PC-3 (cell line): ENCODE measurements at regions of chr5 and their contacts with region 1.

Region 1: GRCh38 chr5:14035859-14036440 is 91.5 kb upstream of the DNAH5 start:
- DNase-seq: peak; percentile 100
- ATAC-seq: peak; percentile 68
- H3K4me3 ChIP-seq: peak overlapping the region; percentile 53
- H3K27ac ChIP-seq: peak overlapping the region; percentile 97
- H3K4me1 ChIP-seq: peaks cover 80% of the 10 kb centered on the region
- H3K27me3 ChIP-seq: no peaks in the 10 kb centered on the region
- CTCF ChIP-seq: no peak

Region 2: DNA sequence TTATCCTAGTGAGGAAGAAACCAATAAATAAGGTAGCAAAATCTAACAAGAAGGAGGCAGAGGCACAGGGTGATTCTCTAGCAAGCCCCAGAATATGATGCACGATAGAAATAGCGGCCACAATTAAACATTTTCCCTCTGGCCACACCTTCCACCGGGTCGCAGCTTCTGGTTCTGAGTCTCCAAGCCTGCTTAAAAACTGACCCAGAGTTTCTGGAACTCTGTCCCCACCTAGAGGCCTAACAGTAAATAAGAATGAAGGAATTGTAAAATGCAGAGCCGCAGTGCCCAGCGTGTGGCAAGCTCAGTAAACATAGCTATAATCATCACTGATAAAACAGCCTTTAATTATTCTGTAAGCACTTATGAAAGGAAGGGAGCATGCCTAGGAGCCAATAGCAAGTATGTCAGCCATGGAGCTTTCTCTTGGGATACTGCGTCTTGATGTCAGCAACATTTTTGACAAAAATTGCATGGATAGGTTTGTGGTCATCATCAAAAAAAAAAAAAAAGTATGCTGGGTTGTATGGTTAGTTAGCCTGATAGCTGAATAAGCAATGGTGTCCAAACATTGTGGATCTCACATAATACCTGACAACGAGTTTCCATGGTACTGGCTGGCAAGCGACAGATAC is 557.0 kb before region 1 on chr5:
- CTCF ChIA-PET with region 1: no interaction called
- POLR2A ChIA-PET with region 1: no interaction called
- intact Hi-C with region 1: no loop called
- DNase-seq: peak; percentile 83
- ATAC-seq: peak; percentile 57
- H3K4me3 ChIP-seq: no peak overlapping the region; the same call in 1 of the 2 replicates
- H3K27ac ChIP-seq: no peak overlapping the region
- H3K4me1 ChIP-seq: peaks cover 49% of the 10 kb centered on the region
- H3K27me3 ChIP-seq: no peaks in the 10 kb centered on the region
- CTCF ChIP-seq: peak; percentile 94

Region 3: DNA sequence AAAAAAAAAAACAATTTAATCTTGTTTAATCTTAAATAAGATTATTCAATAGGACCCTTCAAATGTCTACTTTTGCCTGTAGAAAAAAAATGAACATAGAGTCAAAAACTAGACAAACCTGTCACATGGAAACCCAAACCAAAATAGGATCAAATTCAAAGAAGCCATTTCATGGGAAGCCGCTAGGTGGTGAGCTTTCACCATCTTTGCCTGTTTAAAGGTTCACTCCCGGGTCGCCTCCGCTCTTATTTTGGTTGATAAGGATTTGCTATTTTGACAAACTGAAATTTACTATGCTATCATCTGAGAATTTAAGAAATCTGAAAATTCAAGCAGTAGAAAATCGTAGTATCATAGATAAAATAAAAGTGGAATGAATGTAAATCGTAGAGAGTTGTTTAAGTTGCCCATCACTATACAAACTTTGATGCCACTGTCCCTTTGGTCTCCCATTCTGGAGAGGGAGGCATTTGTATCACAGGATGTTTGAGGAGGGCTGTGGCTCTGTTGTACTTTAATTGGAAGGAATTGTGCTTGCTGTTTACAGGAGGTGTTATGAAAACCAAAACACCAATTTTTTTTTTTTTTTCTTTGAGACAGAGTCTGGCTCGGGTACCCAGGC is 48.0 kb before region 1 on chr5:
- CTCF ChIA-PET with region 1: no interaction called
- POLR2A ChIA-PET with region 1: no interaction called
- intact Hi-C with region 1: loop called (anchors 1 kb)
- DNase-seq: peak; percentile 95
- ATAC-seq: peak; percentile 41
- H3K4me3 ChIP-seq: no peak overlapping the region
- H3K27ac ChIP-seq: peak overlapping the region; percentile 55
- H3K4me1 ChIP-seq: peaks cover 35% of the 10 kb centered on the region
- H3K27me3 ChIP-seq: no peaks in the 10 kb centered on the region
- CTCF ChIP-seq: peak; percentile 98

Region 4: DNA sequence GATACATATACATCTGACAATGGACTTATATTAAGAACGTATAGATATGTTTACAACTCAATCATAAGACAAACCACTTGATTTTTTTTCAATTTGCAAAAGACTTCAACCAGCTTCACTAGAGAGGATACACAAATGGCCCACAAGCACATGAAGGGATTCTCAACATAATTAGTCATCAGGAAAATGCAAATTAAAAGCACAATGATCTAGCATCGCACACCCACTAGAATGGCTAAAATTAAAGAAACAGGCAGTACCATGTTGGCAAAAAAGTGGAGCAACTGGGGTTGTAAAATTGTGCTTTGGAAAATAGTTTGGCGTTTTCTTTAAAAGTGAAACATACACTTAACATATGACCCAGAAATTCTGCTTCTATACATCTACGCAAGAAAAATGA is 27.2 kb after region 1 on chr5:
- CTCF ChIA-PET with region 1: no interaction called
- POLR2A ChIA-PET with region 1: no interaction called
- intact Hi-C with region 1: no loop called
- DNase-seq: no peak
- ATAC-seq: no peak
- H3K4me3 ChIP-seq: no peak overlapping the region
- H3K27ac ChIP-seq: no peak overlapping the region
- H3K4me1 ChIP-seq: 0 out of 2 replicates have a peak, but pooled peaks cover 3% of the 10 kb centered on the region
- H3K27me3 ChIP-seq: no peaks in the 10 kb centered on the region
- CTCF ChIP-seq: no peak

Region 5: DNA sequence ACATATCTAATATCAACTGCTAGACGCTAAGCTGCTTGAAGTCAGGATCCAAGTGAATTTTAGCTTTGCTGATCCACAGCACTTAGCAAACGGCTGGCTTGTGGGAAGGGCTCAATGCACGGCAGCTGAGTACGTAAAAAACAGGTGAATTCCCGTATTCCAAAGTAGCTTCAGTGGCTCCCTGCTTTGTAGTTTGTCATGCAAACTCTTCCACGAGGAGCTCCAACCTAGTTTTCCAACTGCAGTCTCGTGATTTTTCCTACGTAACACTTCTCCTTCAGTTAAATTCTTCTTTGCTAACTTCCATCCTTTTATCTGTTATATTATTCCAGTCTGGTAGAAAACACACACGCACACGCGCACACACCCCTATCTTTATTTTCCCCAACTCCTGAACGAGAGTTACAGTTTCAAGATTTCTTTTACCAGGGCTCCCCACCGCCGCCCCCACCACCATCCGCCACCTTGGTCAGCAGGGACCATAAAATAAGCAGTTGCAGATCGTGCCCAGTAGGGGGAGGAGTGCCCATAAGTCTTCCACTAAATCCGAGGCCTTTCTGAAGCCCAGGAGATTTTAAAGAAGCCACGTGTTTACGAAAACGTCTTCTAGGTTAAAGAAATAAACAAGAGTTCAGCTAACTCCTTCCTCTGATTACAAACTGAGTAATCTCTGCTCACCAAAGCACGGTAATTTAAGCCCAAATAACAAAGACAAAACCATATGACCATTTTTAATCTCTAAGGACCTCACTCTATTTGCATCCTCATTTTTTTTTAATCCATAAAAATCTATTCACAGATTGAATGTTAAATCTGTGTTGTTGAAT is 72.4 kb after region 1 on chr5:
- CTCF ChIA-PET with region 1: no interaction called
- POLR2A ChIA-PET with region 1: no interaction called
- intact Hi-C with region 1: loop called (anchors 2 kb)
- DNase-seq: peak; percentile 91
- ATAC-seq: peak; percentile 78
- H3K4me3 ChIP-seq: peak overlapping the region; percentile 34
- H3K27ac ChIP-seq: peak overlapping the region; percentile 93
- H3K4me1 ChIP-seq: peaks cover 63% of the 10 kb centered on the region
- H3K27me3 ChIP-seq: no peaks in the 10 kb centered on the region
- CTCF ChIP-seq: peak; percentile 88

Region 6: DNA sequence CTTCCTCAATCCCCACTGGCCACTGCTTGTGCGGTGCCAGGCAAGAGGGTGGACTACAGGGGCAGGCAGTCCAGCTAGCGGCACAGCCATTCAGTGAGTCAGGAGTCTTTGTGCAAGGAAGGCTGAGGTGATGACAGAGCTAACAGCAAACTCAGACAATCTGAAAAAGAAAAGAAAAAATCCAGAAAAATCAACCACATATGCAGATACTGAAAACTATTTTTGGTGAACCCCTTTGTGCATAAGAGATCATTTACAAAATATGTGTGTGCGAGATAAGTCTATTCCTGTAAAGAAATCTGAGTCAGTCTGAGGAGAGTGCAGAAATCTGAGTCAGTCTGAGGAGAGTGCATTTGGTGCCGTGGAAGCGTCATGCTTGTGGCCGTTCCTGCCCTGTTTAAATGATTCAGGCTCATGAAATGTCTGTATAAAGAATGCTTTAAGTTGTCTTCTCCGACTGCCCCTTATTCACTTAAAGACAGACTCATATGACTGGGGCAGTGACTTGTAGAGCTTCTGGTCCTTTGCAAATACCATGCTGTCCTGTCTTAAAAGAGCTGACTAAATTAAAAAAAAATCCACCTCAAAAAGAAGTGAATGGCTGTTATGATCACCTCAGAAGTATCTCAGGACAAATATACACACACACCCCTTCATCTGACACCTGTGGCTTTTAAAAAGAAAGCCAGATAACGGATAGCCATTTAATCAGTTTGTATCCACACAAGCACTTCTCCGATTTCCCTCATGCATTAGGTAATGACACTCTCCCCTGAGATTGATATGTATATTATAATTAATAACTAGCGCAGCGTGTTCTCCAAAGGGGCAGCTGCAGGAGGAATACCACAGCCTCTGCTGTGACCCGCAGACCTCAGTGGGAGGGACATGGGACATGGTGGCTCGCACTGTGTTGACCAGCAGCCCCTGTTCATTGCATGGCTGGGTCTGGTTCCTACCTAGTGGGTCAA is 154.5 kb after region 1 on chr5:
- CTCF ChIA-PET with region 1: no interaction called
- POLR2A ChIA-PET with region 1: interaction called, 3 read pairs
- intact Hi-C with region 1: loop called (anchors 1 kb)
- DNase-seq: peak; percentile 99
- ATAC-seq: peak; percentile 84
- H3K4me3 ChIP-seq: peak overlapping the region; percentile 47
- H3K27ac ChIP-seq: peak overlapping the region; percentile 94
- H3K4me1 ChIP-seq: peaks cover 83% of the 10 kb centered on the region
- H3K27me3 ChIP-seq: no peaks in the 10 kb centered on the region
- CTCF ChIP-seq: no peak

Region 7: GRCh38 chr5:14405267-14405666 is 369.3 kb after region 1 on chr5:
- CTCF ChIA-PET with region 1: no interaction called
- POLR2A ChIA-PET with region 1: interaction called, 20 read pairs
- intact Hi-C with region 1: no loop called
- DNase-seq: peak; percentile 72
- ATAC-seq: peak; percentile 58
- H3K4me3 ChIP-seq: peak overlapping the region; percentile 35
- H3K27ac ChIP-seq: peak overlapping the region; percentile 90
- H3K4me1 ChIP-seq: peaks cover 42% of the 10 kb centered on the region
- H3K27me3 ChIP-seq: no peaks in the 10 kb centered on the region
- CTCF ChIP-seq: peak; percentile 83